PC-3 (cell line): ENCODE measurements at regions of chr17 and their contacts with region 1.

Region 1: DNA sequence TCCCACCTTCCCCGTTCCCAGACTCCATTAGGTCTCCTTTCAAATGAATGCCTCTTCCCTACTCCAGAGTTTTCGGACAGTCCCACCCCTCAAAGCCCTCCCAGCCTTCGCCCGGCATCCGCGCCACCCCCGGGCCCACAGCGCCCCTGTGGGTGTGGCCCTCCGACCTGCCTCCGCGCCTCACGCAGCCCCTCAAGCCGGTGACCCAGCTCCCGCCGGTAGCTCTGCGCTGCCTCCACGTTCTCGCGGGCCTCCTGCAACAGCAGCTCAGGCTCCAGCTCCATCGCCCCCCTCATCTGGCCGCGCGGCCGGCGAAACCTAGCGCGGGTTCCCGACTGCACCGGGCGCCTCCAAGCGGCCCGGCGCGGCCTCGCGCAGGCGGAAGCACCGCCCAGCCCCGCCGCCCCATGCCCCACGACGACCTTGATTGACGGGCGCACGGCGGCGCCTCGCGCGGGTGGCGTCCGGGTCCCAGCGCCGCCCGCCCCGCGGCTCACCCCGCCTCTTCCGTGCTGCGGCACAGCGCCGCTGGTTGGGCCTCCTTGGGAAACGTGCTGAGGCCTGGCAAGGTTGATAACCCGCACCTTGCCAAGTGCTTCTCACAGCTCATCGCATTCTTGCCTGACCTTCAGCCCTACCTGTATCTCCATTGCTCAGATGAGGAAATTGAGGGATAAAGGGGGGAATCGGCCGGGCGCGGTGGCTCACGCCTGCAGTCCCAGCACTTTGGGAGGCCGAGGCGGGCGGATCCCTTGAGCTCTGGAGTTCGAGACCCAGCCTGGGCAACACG is at the start of gene CRLF3:
- DNase-seq: peak; percentile 83
- ATAC-seq: peak; percentile 99
- H3K4me3 ChIP-seq: peak within 1 kb of the TSS; percentile 91
- H3K27ac ChIP-seq: peak within 1 kb of the TSS; percentile 26; the same call in 1 of the 2 replicates
- H3K4me1 ChIP-seq: peaks cover 8% of the 10 kb centered on the region; the same call in 1 of the 2 replicates
- H3K27me3 ChIP-seq: no peaks in the 10 kb centered on the region
- CTCF ChIP-seq: peak; percentile 56
- total RNA-seq, gene CRLF3: 6.6 and 9.8 TPM in 2 replicates

Region 2: DNA sequence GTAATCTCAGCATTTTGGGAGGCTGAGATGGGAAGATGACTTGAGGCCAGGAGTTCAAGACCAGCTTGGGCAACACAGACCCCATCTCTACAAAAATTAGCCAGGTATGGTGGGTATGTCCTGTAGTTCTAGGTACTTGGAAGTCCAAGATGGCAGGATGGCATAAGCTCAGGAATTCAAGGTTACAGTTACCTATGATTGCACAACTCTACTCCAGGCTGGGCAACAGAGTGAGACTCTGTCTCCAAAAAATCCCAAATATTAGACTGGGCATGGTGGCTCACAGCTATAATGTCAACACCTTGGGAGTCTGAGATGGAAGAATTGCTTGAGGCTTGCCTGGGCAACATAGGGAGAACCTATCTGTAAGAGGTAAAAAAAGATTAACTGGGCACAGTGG is 63.5 kb before region 1 on chr17:
- CTCF ChIA-PET with region 1: no interaction called
- POLR2A ChIA-PET with region 1: no interaction called
- intact Hi-C with region 1: loop called (anchors 2 kb)
- DNase-seq: no peak
- ATAC-seq: no peak
- H3K4me3 ChIP-seq: no peak overlapping the region
- H3K27ac ChIP-seq: no peak overlapping the region
- H3K4me1 ChIP-seq: no peaks in the 10 kb centered on the region
- H3K27me3 ChIP-seq: no peaks in the 10 kb centered on the region
- CTCF ChIP-seq: no peak